MCF 10A (cell line): ENCODE measurements at regions of chr2 and their contacts with region 1.

Region 1: DNA sequence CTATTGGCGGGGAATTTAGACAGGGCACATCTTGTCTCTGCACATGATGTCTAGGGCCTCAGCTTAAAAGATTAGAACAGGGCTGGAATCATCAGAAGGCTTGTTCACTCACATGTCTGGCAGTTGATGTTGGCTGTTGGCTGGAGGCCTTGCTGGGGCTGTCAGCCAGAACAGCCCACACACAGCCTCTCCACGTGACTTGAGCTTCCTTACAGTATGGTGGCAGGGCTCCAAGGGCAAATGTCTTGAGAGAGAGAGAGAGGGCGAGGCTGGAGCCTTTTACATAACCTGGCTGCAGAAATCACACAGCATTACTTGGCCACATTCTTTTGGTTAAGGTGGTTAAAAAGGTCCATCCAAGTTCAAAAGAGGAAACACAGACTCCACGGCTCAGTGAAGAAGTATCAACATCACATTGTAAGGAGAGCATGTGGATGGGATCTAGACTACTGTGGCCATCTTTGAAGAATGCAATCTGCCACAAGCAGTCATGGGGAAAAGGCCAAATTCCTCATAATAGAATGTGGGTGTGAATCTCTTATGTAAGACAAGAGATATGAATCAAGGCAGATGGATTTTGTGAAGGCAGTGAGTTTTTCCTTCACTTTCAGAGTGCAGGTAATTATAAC is 30.4 kb downstream of the SRSF7 start:
- DNase-seq: peak; percentile 97
- H3K4me3 Mint-ChIP-seq: no peak overlapping the region
- H3K27ac Mint-ChIP-seq: peak overlapping the region; percentile 36
- H3K4me1 Mint-ChIP-seq: peaks cover 19% of the 10 kb centered on the region
- H3K27me3 Mint-ChIP-seq: no peaks in the 10 kb centered on the region
- CTCF ChIP-seq: no peak

Region 2: GRCh38 chr2:38590053-38590452 is 130.7 kb before region 1 on chr2:
- CTCF ChIA-PET with region 1: interaction called, 156 read pairs
- POLR2A ChIA-PET with region 1: no interaction called
- intact Hi-C with region 1: no loop called
- DNase-seq: no peak
- H3K4me3 Mint-ChIP-seq: no peak overlapping the region
- H3K27ac Mint-ChIP-seq: no peak overlapping the region
- H3K4me1 Mint-ChIP-seq: peaks cover 12% of the 10 kb centered on the region
- H3K27me3 Mint-ChIP-seq: no peaks in the 10 kb centered on the region
- CTCF ChIP-seq: no peak

Region 3: DNA sequence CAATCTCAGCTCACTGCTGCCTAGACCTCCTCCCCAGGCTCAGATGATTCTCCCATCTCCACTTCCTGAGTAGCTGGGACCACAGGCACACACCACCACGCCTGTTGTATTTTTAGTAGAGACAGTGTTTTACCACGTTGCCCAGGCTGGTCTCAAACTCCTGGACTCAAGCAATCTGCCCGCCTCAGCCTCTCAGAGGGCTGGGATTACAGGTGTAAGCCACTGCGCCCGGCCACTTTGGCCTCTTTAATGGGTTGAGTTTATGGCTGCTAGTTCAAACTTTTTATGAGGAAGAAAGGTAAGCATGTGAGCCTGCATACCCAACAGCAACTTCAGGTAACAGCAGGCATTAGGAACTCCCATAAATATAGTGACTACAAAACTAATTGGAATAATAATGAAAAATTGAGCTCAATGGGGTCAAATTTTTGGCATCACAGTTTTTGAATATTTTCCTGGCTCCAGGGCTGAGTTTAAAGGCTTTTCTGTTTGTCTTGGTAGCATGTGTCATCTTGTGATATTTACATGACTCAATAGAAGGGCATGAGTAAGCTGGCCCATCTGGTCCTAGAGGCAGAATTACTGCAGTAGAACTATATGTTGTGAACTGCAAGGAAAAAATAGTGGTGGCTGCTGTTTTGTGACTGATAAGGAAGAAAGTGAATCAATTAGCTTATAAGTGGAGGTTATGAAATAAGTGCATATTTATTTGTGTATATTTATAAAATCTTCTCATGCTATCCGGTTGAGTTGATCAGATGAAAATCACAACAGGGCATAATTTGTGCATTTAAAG is 30.0 kb before region 1 on chr2:
- CTCF ChIA-PET with region 1: interaction called, 3 read pairs
- POLR2A ChIA-PET with region 1: interaction called, 17 read pairs
- intact Hi-C with region 1: no loop called
- DNase-seq: peak; percentile 84
- H3K4me3 Mint-ChIP-seq: no peak overlapping the region
- H3K27ac Mint-ChIP-seq: peak overlapping the region; percentile 86
- H3K4me1 Mint-ChIP-seq: peaks cover 25% of the 10 kb centered on the region
- H3K27me3 Mint-ChIP-seq: no peaks in the 10 kb centered on the region
- CTCF ChIP-seq: no peak